PC-9 (cell line): ENCODE measurements at regions of chr20 and their contacts with region 1.

Region 1: DNA sequence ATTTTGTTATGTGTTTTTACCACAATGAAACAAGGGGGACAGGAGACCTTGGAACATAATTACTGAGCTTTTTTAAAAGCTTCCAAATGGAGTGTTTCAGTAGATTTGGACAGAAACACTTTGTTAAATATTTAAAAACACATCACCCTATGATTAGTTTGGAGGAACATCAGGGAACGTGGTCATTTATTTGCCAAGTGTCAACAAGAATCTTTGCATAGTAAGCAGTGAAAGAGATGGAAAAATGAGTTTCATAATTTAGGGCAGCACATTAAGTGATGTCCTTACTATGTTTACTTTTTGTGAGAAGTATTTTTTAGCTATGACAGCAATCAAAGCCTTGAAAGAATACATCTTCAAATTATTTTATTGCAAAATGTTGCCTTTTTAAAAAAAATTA is 82.6 kb downstream of the PROKR2 start:
- DNase-seq: no peak
- H3K4me3 ChIP-seq: no peak overlapping the region
- H3K27ac ChIP-seq: no peak overlapping the region
- H3K4me1 ChIP-seq: no peaks in the 10 kb centered on the region
- H3K27me3 ChIP-seq: peaks cover 65% of the 10 kb centered on the region
- CTCF ChIP-seq: no peak

Region 2: GRCh38 chr20:5156675-5157448 is 77.3 kb before region 1 on chr20:
- CTCF ChIA-PET with region 1: no interaction called
- POLR2A ChIA-PET with region 1: no interaction called
- intact Hi-C with region 1: no loop called
- DNase-seq: peak; percentile 51 to 91
- H3K4me3 ChIP-seq: no peak overlapping the region
- H3K27ac ChIP-seq: peak overlapping the region; percentile 98
- H3K4me1 ChIP-seq: peaks cover 91% of the 10 kb centered on the region
- H3K27me3 ChIP-seq: no peaks in the 10 kb centered on the region
- CTCF ChIP-seq: no peak

Region 3: DNA sequence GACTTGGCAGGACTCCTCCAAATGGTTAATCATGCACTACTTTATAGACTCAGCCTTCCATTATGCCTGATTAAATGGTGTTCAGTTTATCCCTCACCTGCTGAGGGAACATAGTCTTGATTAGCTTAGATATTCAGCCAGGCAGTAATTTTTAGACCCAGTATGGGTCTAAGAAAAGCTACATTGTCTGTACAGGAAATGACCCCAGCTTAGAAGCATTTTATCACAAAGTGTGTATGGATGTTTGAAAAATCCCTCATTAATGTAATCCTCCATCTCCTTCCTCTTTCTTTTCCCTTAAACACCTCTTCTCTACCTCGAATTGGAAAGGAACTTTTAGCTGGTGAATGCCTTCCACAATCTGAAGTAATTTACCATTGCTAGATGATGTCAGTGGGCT is 1281.1 kb after region 1 on chr20:
- CTCF ChIA-PET with region 1: interaction called, 10 read pairs
- POLR2A ChIA-PET with region 1: no interaction called
- intact Hi-C with region 1: no loop called
- DNase-seq: no peak
- H3K4me3 ChIP-seq: no peak overlapping the region
- H3K27ac ChIP-seq: no peak overlapping the region
- H3K4me1 ChIP-seq: no peaks in the 10 kb centered on the region
- H3K27me3 ChIP-seq: no peaks in the 10 kb centered on the region
- CTCF ChIP-seq: no peak